HCT116 (cell line): ENCODE measurements at regions of chr7 and their contacts with region 1.

Region 1: GRCh38 chr7:82729172-82730030 is 285.8 kb upstream of the CACNA2D1 start:
- DNase-seq: peak; percentile 48
- ATAC-seq: peak; percentile 72; the same call in 1 of the 2 replicates
- H3K4me3 ChIP-seq: no peak overlapping the region; a peak in 1 of 4 replicates
- H3K27ac ChIP-seq: no peak overlapping the region
- H3K4me1 ChIP-seq: no peaks in the 10 kb centered on the region
- H3K27me3 ChIP-seq: no peaks in the 10 kb centered on the region
- CTCF ChIP-seq: peak; percentile 73 to 87 (median 78)
- POLR2A ChIP-seq: no peak
- RAD21 ChIP-seq: peak; percentile 86

Region 2: DNA sequence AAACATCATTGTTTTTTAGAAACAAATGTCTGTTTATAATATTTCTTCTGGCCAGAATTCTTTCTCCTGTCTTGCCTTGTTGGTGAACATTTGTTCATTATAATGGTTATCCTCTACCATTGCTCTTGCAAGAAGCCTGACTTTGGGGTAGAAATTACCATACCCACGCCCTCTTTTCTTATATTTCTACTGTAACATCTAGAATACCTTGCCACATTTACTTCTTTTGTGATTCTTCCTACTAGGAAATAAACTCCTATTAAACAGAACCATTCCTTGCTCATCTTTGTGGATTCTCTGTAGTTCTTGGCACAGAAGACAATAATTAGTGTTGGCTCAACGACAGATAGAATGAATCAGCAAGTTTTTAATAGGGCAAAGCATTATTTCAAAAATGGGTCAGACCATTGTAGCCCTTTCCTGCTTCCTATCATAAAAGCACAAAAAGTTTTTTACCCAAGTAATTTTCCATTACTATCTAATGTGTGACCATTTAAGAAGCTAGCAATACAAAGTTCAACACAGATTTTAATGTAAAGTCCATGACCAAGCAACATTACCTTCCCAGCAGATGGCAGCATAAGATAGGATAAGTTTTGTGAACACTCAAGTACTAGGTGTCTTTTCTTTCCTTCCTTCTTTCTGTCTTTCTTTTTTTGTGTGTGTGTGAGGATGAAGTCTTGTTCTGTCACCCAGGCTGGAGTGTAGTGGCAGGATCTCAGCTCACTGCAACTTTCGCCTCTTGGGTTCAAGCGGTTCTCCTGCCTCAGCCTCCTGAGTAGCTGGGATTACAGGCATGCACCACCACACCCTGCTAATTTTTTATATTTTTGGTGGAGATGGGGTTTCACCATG is 1229.9 kb before region 1 on chr7:
- CTCF ChIA-PET with region 1: interaction called, 9 read pairs
- POLR2A ChIA-PET with region 1: no interaction called
- RAD21 ChIA-PET with region 1: no interaction called
- intact Hi-C with region 1: loop called (anchors 1 kb)
- DNase-seq: peak; percentile 81
- ATAC-seq: peak; percentile 83
- H3K4me3 ChIP-seq: no peak overlapping the region
- H3K27ac ChIP-seq: no peak overlapping the region
- H3K4me1 ChIP-seq: peaks cover 0 to 5% of the 10 kb centered on the region in 2 experiments; a peak in 1 of 4 replicates
- H3K27me3 ChIP-seq: no peaks in the 10 kb centered on the region
- CTCF ChIP-seq: peak; percentile 36 to 62 (median 60); a peak in 4 of 6 replicates
- POLR2A ChIP-seq: no peak
- RAD21 ChIP-seq: peak; percentile 85

Region 3: DNA sequence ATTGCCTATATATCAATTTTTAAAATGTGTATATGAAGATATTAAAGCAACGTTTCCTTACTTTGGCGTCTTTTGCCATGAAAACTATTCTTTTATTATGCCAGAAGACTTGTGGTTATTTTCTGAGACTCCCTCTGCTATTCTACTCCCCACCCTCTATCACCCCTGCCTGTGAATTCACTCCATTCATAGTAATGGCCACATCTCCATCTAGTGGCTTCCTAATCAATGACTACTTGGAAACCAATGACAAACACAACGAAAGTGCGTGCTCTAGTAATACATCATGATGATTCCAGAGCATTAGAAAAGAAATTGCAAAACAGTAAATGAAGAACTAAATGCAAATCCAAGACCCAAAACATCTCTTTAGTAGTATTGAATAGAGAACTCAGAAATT is 772.9 kb before region 1 on chr7:
- CTCF ChIA-PET with region 1: no interaction called
- POLR2A ChIA-PET with region 1: no interaction called
- RAD21 ChIA-PET with region 1: no interaction called
- intact Hi-C with region 1: loop called (anchors 5 kb)
- DNase-seq: peak; percentile 47
- ATAC-seq: peak; percentile 96
- H3K4me3 ChIP-seq: no peak overlapping the region
- H3K27ac ChIP-seq: no peak overlapping the region
- H3K4me1 ChIP-seq: no peaks in the 10 kb centered on the region
- H3K27me3 ChIP-seq: no peaks in the 10 kb centered on the region
- CTCF ChIP-seq: peak; percentile 61 to 75 (median 70)
- POLR2A ChIP-seq: no peak
- RAD21 ChIP-seq: peak; percentile 80

Region 4: DNA sequence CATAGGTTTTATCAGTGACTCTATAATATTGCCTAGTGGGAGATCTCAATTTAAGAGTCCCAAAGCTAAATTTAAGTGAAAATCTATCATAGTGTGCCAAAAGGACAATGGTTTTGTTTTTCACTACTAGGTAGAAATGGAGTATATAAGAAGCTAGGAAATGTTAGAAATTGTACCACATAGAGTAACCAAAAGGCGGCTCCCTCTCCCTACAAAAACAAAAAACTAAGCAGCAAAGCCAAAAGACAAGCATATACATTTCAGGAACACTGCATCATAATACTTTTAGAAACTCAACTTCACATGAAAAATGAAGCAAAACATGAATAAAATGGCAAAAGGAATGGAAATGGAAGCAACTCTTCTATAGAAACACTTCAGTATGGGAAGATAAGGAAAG is 557.4 kb before region 1 on chr7:
- CTCF ChIA-PET with region 1: no interaction called
- POLR2A ChIA-PET with region 1: no interaction called
- RAD21 ChIA-PET with region 1: no interaction called
- intact Hi-C with region 1: loop called (anchors 5 kb)
- DNase-seq: no peak
- ATAC-seq: no peak
- H3K4me3 ChIP-seq: no peak overlapping the region
- H3K27ac ChIP-seq: no peak overlapping the region
- H3K4me1 ChIP-seq: no peaks in the 10 kb centered on the region
- H3K27me3 ChIP-seq: no peaks in the 10 kb centered on the region
- CTCF ChIP-seq: 0 out of 6 replicates have a peak, but pooled peaks of 1 of the 3 experiments have one; percentile 4
- POLR2A ChIP-seq: no peak
- RAD21 ChIP-seq: peak; percentile 37

Region 5: GRCh38 chr7:82481499-82482097 is 247.8 kb before region 1 on chr7:
- CTCF ChIA-PET with region 1: no interaction called
- POLR2A ChIA-PET with region 1: no interaction called
- RAD21 ChIA-PET with region 1: no interaction called
- intact Hi-C with region 1: loop called (anchors 10 kb)
- DNase-seq: peak; percentile 12
- ATAC-seq: no peak
- H3K4me3 ChIP-seq: no peak overlapping the region
- H3K27ac ChIP-seq: no peak overlapping the region
- H3K4me1 ChIP-seq: no peaks in the 10 kb centered on the region
- H3K27me3 ChIP-seq: no peaks in the 10 kb centered on the region
- CTCF ChIP-seq: peak; percentile 39 to 72 (median 58); a peak in 5 of 6 replicates
- POLR2A ChIP-seq: no peak
- RAD21 ChIP-seq: peak; percentile 49

Region 6: DNA sequence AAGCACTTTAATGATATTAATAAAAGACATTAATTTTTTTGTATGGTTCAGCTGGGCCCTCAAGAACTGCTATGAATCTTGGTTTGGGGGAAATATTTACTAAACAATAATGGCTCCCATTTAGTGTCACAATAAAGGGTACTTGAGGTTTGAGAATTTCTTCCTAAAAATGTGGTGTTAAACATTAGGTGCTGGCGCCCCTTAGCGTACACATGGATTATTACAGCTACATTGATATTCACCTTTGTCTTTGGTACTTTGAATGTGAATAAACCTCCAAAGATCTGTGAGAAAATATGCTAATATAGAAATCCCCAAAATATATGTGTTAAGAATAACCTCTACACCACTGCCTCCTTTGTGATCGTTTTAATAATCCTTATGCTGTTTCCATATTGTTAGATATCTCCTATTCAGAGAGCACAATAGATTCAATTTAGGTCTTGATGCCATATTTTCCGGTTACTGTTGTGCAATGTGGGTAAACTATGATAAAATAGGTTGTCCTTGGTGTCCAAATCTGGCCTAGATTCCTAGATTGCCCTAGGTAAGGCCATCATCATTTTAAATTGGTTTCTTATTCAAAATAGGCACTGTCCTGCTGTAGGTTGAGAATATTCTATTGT is 124.0 kb before region 1 on chr7:
- CTCF ChIA-PET with region 1: interaction called, 4 read pairs
- POLR2A ChIA-PET with region 1: no interaction called
- RAD21 ChIA-PET with region 1: interaction called in 1 of 2 experiments, 3 read pairs
- intact Hi-C with region 1: loop called (anchors 5 kb)
- DNase-seq: peak; percentile 18
- ATAC-seq: peak; percentile 62; the same call in 1 of the 2 replicates
- H3K4me3 ChIP-seq: no peak overlapping the region
- H3K27ac ChIP-seq: no peak overlapping the region
- H3K4me1 ChIP-seq: 0 out of 4 replicates have a peak, but pooled peaks cover 0 to 2% of the 10 kb centered on the region in 2 experiments
- H3K27me3 ChIP-seq: no peaks in the 10 kb centered on the region
- CTCF ChIP-seq: peak; percentile 56 to 86 (median 60); a peak in 5 of 6 replicates
- POLR2A ChIP-seq: no peak
- RAD21 ChIP-seq: peak; percentile 74

Region 7: GRCh38 chr7:82945480-82945879 is 216.1 kb after region 1 on chr7:
- CTCF ChIA-PET with region 1: no interaction called
- POLR2A ChIA-PET with region 1: no interaction called
- RAD21 ChIA-PET with region 1: no interaction called
- intact Hi-C with region 1: no loop called
- DNase-seq: no peak
- ATAC-seq: no peak
- H3K4me3 ChIP-seq: no peak overlapping the region
- H3K27ac ChIP-seq: no peak overlapping the region
- H3K4me1 ChIP-seq: no peaks in the 10 kb centered on the region
- H3K27me3 ChIP-seq: no peaks in the 10 kb centered on the region
- CTCF ChIP-seq: no peak
- POLR2A ChIP-seq: no peak
- RAD21 ChIP-seq: no peak